Gastrocnemius medialis (tissue), 4 donors: ENCODE measurements at regions of chr3 and their contacts with region 1.

Region 1: DNA sequence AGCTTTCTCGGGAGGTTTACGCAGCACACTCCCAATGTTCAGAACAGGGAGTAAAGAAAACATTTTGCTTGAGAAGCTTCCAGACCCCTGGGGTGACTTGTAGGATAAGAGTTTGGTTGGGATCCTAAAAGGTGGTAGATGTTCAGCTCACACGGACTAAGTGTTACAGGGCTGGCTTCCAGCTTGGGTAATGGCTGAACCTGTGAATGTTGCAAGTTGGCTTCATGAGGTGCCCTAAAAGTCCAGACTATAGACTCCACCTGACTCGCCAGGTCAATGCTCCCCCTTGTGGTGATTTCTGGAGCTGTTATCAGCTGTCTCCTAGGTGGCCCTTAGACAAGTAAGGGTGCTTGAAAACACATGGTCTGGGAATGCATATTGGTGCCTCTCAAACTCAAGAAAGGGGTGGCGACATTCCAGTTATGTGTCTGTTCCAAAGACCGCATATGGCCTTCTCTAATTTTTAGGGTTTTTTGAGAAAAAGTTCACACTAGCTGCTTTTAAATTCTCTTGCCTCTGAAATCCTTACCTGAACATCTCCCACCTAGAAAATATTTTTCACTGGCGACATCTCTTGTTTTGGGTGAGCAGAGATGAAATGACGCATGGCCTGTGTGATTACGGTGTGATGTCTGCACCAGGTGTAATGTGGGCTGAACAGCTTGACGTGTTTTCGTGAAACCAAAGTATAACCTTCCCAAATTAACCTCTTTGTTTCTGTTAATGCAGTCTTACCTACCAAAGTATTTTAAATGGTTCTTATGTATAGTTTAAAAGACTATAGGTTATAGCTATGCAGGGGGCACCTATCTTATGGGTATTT is 175.7 kb upstream of the KBTBD8 start:
- DNase-seq: peak; percentile 15 to 60
- ATAC-seq: peak; percentile 88 to 94
- H3K4me3 ChIP-seq: no peak overlapping the region
- H3K27ac ChIP-seq: no peak overlapping the region
- H3K4me1 ChIP-seq: no peaks in the 10 kb centered on the region
- H3K27me3 ChIP-seq: no peaks in the 10 kb centered on the region
- CTCF ChIP-seq: peak; percentile 73 to 83 (median 80)
- POLR2A ChIP-seq: no peak

Region 2: DNA sequence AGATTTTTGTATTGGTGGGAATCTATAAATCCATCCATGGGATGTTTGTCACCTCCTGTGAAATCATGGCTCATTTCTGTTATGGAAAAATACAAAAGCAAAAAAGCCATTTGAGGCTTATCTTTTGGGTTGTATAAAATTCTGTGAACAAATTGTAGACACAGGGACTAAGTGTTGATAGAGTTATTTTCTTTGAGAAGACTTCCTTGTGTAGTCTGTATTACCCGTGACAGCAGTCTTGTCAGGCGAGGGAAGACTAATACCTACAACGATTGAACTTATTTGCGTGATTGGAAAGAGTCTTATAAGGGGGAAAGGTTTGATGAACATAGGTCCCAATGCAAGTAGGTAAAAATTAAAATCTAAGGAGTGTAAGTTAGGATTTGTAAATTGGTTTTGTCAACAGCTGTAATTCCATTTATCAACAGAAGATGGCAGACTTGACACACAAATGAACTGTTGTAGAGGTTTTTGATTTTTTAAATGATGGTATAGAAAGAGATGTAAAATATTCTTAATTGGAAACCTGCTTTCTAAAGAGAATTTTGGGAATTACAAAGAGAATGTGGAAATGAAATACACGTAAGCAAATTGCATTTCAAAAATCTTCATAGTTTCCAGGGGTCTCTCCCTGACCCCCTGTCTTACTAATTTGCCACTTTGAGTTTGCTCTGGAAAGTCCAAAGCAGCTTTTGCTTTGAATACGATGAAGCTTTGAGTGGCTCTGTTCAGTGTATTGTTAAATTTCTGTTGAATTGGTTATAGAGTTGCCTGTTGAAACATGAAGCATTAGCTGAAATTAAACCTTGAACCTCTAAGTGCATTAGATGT is 568.4 kb before region 1 on chr3:
- in situ Hi-C with region 1: no loop called
- intact Hi-C with region 1: loop called (anchors 1 kb)
- DNase-seq: no peak
- ATAC-seq: peak in 1 of 2 donors; percentile 16
- H3K4me3 ChIP-seq: no peak overlapping the region
- H3K27ac ChIP-seq: no peak overlapping the region
- H3K4me1 ChIP-seq: no peaks in the 10 kb centered on the region
- H3K27me3 ChIP-seq: no peaks in the 10 kb centered on the region
- CTCF ChIP-seq: peak; percentile 69 to 78 (median 71)
- POLR2A ChIP-seq: no peak

Region 3: DNA sequence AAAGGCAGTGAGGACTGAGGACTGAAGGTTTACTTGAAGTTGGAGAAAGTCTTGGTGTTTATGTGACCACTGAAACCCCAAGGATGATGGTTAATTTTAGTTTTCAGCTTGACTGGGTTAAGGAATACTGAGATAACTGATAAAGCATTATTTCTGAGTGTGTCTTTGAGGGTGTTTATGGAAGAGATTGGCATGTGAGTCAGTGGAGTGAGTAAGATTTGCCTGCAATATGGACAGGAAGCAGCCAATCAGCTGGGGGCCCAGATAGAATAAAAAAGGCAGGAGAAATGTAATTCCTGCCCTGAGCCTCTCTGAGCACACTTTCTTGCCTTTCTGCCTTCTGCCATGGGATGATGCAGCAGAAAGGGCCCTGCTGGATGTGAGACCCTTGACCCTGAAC is 268.1 kb after region 1 on chr3:
- in situ Hi-C with region 1: no loop called
- intact Hi-C with region 1: no loop called
- DNase-seq: no peak
- ATAC-seq: no peak
- H3K4me3 ChIP-seq: no peak overlapping the region
- H3K27ac ChIP-seq: no peak overlapping the region
- H3K4me1 ChIP-seq: no peaks in the 10 kb centered on the region
- H3K27me3 ChIP-seq: no peaks in the 10 kb centered on the region
- CTCF ChIP-seq: no peak
- POLR2A ChIP-seq: no peak